ENCODE measurements at regions of chr11 and their contacts with region 1.

Region 1: GRCh38 chr11:128522055-128522942 is 65.1 kb downstream of the ETS1 start:
- DNase-seq: peak; percentile 67 to 95 (median 84)
- ATAC-seq: peak; percentile 87
- H3K4me3 ChIP-seq: peak overlapping the region; percentile 96
- H3K4me3 Mint-ChIP-seq: peak overlapping the region; percentile 94 to 100 (median 98)
- H3K27ac ChIP-seq: peak overlapping the region; percentile 97
- H3K27ac Mint-ChIP-seq: peak overlapping the region; percentile 94 to 99 (median 98)
- H3K4me1 ChIP-seq: peaks cover 36 to 43% of the 10 kb centered on the region in 2 donors
- H3K4me1 Mint-ChIP-seq: peaks cover 35 to 52% (median 45%) of the 10 kb centered on the region in 7 donors
- H3K27me3 ChIP-seq: no peaks in the 10 kb centered on the region
- H3K27me3 Mint-ChIP-seq: peaks cover 0 to 3% (median 0%) of the 10 kb centered on the region in 5 donors

Region 2: DNA sequence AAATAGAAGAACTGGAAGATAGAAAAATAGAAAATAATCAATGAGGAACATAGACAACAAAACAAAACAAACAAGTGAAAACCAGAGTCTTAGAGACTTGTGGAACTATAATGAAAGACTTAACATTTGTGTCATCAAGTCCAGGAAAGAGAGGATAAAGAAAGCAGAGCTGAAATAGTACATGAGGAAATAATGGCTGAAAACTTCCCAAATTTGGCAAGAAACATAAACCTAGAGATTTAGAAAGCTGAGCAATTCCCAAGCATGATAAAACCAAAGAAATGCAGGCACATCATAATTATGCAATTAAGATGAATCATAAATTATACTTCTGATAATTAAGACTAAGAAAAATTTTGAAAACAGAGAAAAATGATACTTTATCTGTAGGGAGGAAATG is 549.5 kb before region 1 on chr11:
- CTCF ChIA-PET with region 1: no interaction called
- POLR2A ChIA-PET with region 1: no interaction called
- intact Hi-C with region 1: no loop called
- DNase-seq: no peak
- ATAC-seq: no peak
- H3K4me3 ChIP-seq: no peak overlapping the region
- H3K4me3 Mint-ChIP-seq: no peak overlapping the region
- H3K27ac ChIP-seq: no peak overlapping the region
- H3K27ac Mint-ChIP-seq: no peak overlapping the region
- H3K4me1 ChIP-seq: no peaks in the 10 kb centered on the region
- H3K4me1 Mint-ChIP-seq: no peaks in the 10 kb centered on the region
- H3K27me3 ChIP-seq: no peaks in the 10 kb centered on the region
- H3K27me3 Mint-ChIP-seq: peaks cover 7 to 38% (median 30%) of the 10 kb centered on the region in 5 donors

Region 3: GRCh38 chr11:128323381-128323780 is 198.9 kb before region 1 on chr11:
- CTCF ChIA-PET with region 1: interaction called, 18 read pairs
- POLR2A ChIA-PET with region 1: interaction called, 50 read pairs
- intact Hi-C with region 1: loop called (anchors 1 to 2 kb)
- DNase-seq: peak in 7 of 9 donors; percentile 51 to 69 (median 60)
- ATAC-seq: no peak
- H3K4me3 ChIP-seq: peak overlapping the region; percentile 1
- H3K4me3 Mint-ChIP-seq: peak overlapping the region; percentile 21 to 89 (median 68)
- H3K27ac ChIP-seq: peak overlapping the region; percentile 91
- H3K27ac Mint-ChIP-seq: peak overlapping the region; percentile 95 to 99 (median 96)
- H3K4me1 ChIP-seq: peaks cover 80% of the 10 kb centered on the region in 2 donors
- H3K4me1 Mint-ChIP-seq: peaks cover 57 to 97% (median 87%) of the 10 kb centered on the region in 7 donors
- H3K27me3 ChIP-seq: no peaks in the 10 kb centered on the region
- H3K27me3 Mint-ChIP-seq: no peaks in the 10 kb centered on the region

Region 4: GRCh38 chr11:128497061-128497775 is 25.1 kb before region 1 on chr11:
- CTCF ChIA-PET with region 1: interaction called, 7 read pairs
- POLR2A ChIA-PET with region 1: interaction called, 600 read pairs
- intact Hi-C with region 1: loop called in 1 of 2 experiments (anchors 1 kb)
- DNase-seq: no peak
- ATAC-seq: peak; percentile 32
- H3K4me3 ChIP-seq: peak overlapping the region; percentile 36
- H3K4me3 Mint-ChIP-seq: peak overlapping the region; percentile 81 to 100 (median 94)
- H3K27ac ChIP-seq: peak overlapping the region; percentile 97
- H3K27ac Mint-ChIP-seq: peak overlapping the region; percentile 89 to 99 (median 95)
- H3K4me1 ChIP-seq: peaks cover 90 to 95% of the 10 kb centered on the region in 2 donors
- H3K4me1 Mint-ChIP-seq: peaks cover 83 to 100% (median 97%) of the 10 kb centered on the region in 7 donors
- H3K27me3 ChIP-seq: no peaks in the 10 kb centered on the region
- H3K27me3 Mint-ChIP-seq: no peaks in the 10 kb centered on the region

Region 5: GRCh38 chr11:128582496-128583366 is 60.4 kb after region 1 on chr11:
- CTCF ChIA-PET with region 1: interaction called, 3 read pairs
- POLR2A ChIA-PET with region 1: interaction called, 5 read pairs
- intact Hi-C with region 1: loop called (anchors 1 to 2 kb)
- DNase-seq: no peak
- ATAC-seq: peak; percentile 61
- H3K4me3 ChIP-seq: no peak overlapping the region
- H3K4me3 Mint-ChIP-seq: peak overlapping the region; percentile 15 to 78 (median 70)
- H3K27ac ChIP-seq: no peak overlapping the region
- H3K27ac Mint-ChIP-seq: peak overlapping the region in 7 of 9 donors; percentile 38 to 93 (median 63)
- H3K4me1 ChIP-seq: peaks cover 0 to 6% of the 10 kb centered on the region in 2 donors
- H3K4me1 Mint-ChIP-seq: peaks cover 40 to 67% (median 56%) of the 10 kb centered on the region in 7 donors
- H3K27me3 ChIP-seq: no peaks in the 10 kb centered on the region
- H3K27me3 Mint-ChIP-seq: peaks cover 0 to 21% (median 0%) of the 10 kb centered on the region in 5 donors

Region 6: GRCh38 chr11:128725630-128726319 is 203.5 kb after region 1 on chr11:
- CTCF ChIA-PET with region 1: no interaction called
- POLR2A ChIA-PET with region 1: interaction called, 3 read pairs
- intact Hi-C with region 1: loop called in 1 of 2 experiments (anchors 10 kb)
- DNase-seq: peak; percentile 32 to 90 (median 86)
- ATAC-seq: peak; percentile 76
- H3K4me3 ChIP-seq: peak overlapping the region; percentile 62
- H3K4me3 Mint-ChIP-seq: peak overlapping the region; percentile 70 to 96 (median 86)
- H3K27ac ChIP-seq: peak overlapping the region; percentile 65
- H3K27ac Mint-ChIP-seq: peak overlapping the region; percentile 71 to 98 (median 92)
- H3K4me1 ChIP-seq: peaks cover 96 to 99% of the 10 kb centered on the region in 2 donors
- H3K4me1 Mint-ChIP-seq: peaks cover 90 to 100% (median 97%) of the 10 kb centered on the region in 7 donors
- H3K27me3 ChIP-seq: no peaks in the 10 kb centered on the region
- H3K27me3 Mint-ChIP-seq: no peaks in the 10 kb centered on the region